Calu3 (cell line): ENCODE measurements at regions of chr7 and their contacts with region 1.

Region 1: DNA sequence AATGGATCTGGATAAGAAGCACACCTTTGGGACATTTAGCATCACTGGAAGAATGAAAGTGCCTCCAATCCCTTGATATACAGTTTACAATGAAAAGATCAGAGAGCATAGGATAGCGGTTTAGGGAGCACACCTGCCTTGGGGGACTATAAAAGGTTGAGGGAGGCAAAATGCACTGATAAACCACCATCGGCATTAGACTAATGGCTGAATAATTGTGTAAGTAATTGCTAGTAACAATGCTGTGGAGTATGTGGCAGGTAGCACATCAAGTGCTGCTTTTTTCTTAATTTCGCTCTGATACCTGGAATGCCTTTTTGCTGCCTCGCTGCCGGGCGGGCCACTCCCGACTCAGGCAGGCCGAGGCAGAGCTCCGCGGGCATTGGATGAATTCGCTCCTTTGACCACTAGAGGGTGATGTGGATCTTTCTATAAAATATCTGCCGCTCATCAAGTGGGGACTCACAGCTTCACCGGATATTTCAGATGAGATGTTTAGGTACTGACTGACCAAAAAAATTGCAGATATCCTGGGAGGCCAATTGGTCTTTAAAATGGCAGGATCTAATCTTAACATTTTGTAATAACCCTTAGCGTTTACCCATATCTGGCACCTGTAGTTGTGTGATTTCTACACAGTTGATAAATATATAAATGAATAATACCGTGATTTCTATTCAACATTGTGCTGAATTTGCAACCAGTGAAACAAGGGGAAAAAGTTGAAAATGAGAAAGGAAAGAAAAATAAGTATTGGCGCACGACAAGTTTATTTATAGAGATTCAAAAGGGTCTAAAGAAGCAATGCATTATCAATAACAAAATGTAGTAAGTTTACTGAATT is 116.8 kb upstream of the PRSS1 start:
- DNase-seq: peak; percentile 70
- H3K4me3 Mint-ChIP-seq: no peak overlapping the region
- H3K27ac Mint-ChIP-seq: no peak overlapping the region
- H3K4me1 Mint-ChIP-seq: no peaks in the 10 kb centered on the region
- H3K27me3 Mint-ChIP-seq: peaks cover 56% of the 10 kb centered on the region
- CTCF ChIP-seq: peak; percentile 39

Region 2: GRCh38 chr7:142535123-142535779 is 97.3 kb before region 1 on chr7:
- CTCF ChIA-PET with region 1: interaction called, 15 read pairs
- intact Hi-C with region 1: no loop called
- DNase-seq: peak; percentile 82
- H3K4me3 Mint-ChIP-seq: no peak overlapping the region
- H3K27ac Mint-ChIP-seq: no peak overlapping the region
- H3K4me1 Mint-ChIP-seq: peaks cover 15% of the 10 kb centered on the region
- H3K27me3 Mint-ChIP-seq: peaks cover 12% of the 10 kb centered on the region
- CTCF ChIP-seq: peak; percentile 81

Region 3: DNA sequence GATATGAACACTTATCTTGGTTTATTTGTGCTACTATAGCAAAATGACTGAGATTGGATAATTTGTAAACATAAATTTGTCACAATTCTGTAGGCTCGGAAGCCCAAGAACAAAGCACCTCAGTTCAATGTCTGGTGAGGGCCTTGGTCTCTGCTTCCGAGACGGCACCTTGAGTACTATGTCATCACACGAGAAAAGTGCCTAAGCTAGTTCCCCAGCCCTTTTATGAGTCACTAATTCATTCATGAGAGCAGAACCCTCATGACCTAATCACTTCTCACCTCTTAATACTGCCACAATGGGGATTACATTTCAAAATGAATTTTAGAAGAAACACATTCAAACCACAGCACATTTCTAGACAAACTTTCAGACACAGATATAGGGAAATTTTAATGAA is 64.8 kb after region 1 on chr7:
- CTCF ChIA-PET with region 1: no interaction called
- intact Hi-C with region 1: no loop called
- DNase-seq: peak; percentile 25
- H3K4me3 Mint-ChIP-seq: no peak overlapping the region
- H3K27ac Mint-ChIP-seq: no peak overlapping the region
- H3K4me1 Mint-ChIP-seq: peaks cover 21% of the 10 kb centered on the region
- H3K27me3 Mint-ChIP-seq: no peaks in the 10 kb centered on the region
- CTCF ChIP-seq: no peak

Region 4: GRCh38 chr7:142711746-142712619 is 79.5 kb after region 1 on chr7:
- CTCF ChIA-PET with region 1: interaction called, 3 read pairs
- intact Hi-C with region 1: loop called (anchors 5 kb)
- DNase-seq: peak; percentile 18
- H3K4me3 Mint-ChIP-seq: no peak overlapping the region
- H3K27ac Mint-ChIP-seq: no peak overlapping the region
- H3K4me1 Mint-ChIP-seq: peaks cover 12% of the 10 kb centered on the region
- H3K27me3 Mint-ChIP-seq: peaks cover 80% of the 10 kb centered on the region
- CTCF ChIP-seq: peak; percentile 59

Region 5: GRCh38 chr7:142811154-142811737 is 178.7 kb after region 1 on chr7:
- CTCF ChIA-PET with region 1: interaction called, 14 read pairs
- intact Hi-C with region 1: loop called (anchors 1 kb)
- DNase-seq: peak; percentile 39
- H3K4me3 Mint-ChIP-seq: no peak overlapping the region
- H3K27ac Mint-ChIP-seq: no peak overlapping the region
- H3K4me1 Mint-ChIP-seq: peaks cover 47% of the 10 kb centered on the region
- H3K27me3 Mint-ChIP-seq: peaks cover 66% of the 10 kb centered on the region
- CTCF ChIP-seq: peak; percentile 73

Region 6: GRCh38 chr7:142968229-142968628 is 335.7 kb after region 1 on chr7:
- CTCF ChIA-PET with region 1: interaction called, 13 read pairs
- intact Hi-C with region 1: no loop called
- DNase-seq: no peak
- H3K4me3 Mint-ChIP-seq: no peak overlapping the region
- H3K27ac Mint-ChIP-seq: no peak overlapping the region
- H3K4me1 Mint-ChIP-seq: no peaks in the 10 kb centered on the region
- H3K27me3 Mint-ChIP-seq: peaks cover 50% of the 10 kb centered on the region
- CTCF ChIP-seq: no peak

Region 7: GRCh38 chr7:143008007-143008901 is 375.7 kb after region 1 on chr7:
- CTCF ChIA-PET with region 1: interaction called, 8 read pairs
- intact Hi-C with region 1: loop called (anchors 5 kb)
- DNase-seq: peak; percentile 85
- H3K4me3 Mint-ChIP-seq: no peak overlapping the region
- H3K27ac Mint-ChIP-seq: no peak overlapping the region
- H3K4me1 Mint-ChIP-seq: peaks cover 7% of the 10 kb centered on the region
- H3K27me3 Mint-ChIP-seq: peaks cover 70% of the 10 kb centered on the region
- CTCF ChIP-seq: peak; percentile 93